Endothelial cell of umbilical vein (primary cell): ENCODE measurements at regions of chr21 and their contacts with region 1.

Region 1: DNA sequence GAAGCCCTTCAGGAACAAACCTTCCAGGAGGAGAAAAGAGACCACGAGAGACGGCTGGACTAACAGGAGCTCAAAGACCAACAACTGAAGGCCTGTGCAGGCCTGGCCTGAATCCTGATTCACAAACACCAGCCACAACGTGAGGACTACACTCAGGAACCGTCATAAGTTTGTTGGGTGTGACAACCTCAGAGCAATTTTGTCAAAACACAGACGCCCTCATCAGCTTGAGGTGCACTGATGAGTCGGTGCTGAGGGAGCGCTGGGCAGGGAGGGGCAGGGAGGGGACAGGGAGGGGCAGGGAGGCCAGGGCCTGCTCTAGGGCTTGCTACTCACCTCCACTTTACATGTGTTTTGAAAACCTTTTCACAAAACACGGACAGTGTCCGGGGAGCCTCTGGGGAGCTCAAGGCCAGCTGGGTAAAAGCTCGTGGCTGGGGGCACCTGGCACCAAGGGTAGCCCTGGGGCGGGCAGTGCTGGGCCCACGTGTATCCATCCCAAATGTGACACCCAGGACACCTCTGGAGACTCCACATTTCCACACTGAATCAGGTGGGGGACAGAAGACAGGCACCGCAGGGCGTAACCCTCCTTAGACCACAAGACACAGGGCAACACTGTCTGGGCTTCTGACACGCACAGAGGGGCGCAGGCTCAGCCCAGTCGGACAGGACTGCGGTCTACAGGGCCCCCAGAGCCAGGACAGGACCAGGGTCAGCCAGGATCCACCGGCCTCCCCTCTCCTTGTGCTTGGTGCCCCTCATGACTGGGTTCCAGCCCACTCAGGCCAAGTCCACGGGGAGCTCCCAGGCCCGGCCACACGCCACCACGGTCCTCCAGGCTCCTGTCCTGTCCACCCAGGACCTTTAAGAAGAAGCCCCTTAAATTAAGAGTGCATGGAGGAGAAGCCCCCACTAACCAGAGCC is 16.5 kb downstream of the LSS start:
- DNase-seq: no peak
- H3K4me3 ChIP-seq: no peak overlapping the region
- H3K27ac ChIP-seq: no peak overlapping the region
- H3K4me1 ChIP-seq: no peaks in the 10 kb centered on the region
- H3K27me3 ChIP-seq: no peaks in the 10 kb centered on the region
- CTCF ChIP-seq: no peak
- POLR2A ChIP-seq: no peak

Region 2: DNA sequence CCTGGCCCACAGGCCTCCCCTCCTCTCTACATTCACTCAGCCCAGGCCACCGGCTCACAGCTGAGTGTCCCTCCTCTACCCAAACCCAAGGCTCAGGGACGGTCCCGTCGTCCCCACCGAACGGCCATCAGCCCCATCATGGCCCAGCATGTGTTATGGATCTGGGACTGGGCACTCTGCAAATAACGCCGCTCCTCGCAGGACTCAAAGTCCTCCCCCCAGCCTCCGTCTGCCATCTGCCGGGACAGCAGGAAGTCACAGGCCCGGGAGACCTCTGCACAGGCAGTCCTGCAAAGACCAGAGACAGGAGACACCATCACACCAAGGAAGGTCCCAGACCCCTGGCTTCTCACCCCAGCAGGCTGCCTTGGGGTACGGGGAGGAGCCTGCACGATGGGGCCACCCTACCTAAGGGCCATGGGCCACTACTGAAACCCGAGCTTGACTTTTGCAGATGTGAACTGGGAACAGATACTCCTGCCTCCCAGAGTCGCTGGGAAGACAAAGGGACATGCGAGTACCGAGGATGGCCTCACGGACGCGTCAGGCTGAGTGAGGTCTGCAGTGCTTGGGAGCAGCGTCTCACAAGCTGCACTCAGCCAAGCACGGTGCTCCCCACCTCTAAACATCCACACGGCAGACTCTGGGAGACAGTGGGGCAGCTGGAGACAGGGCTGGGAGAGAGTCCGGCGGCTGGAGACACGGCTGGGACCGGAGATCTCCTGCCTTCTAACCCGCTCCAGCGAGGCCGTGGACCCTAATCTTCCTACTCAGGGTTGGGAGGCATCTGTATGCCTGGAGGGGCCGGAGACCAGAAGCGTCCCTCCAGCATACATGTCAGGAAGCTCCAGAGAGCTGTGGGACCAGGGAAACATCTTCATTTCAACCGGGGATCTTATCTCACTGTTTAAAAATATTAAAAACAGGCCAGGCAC is 17.4 kb before region 1 on chr21:
- CTCF ChIA-PET with region 1: no interaction called
- POLR2A ChIA-PET with region 1: interaction called, 10 read pairs
- dilution Hi-C with region 1: no loop called
- intact Hi-C with region 1: no loop called
- DNase-seq: no peak
- H3K4me3 ChIP-seq: no peak overlapping the region
- H3K27ac ChIP-seq: no peak overlapping the region
- H3K4me1 ChIP-seq: peaks cover 3% of the 10 kb centered on the region
- H3K27me3 ChIP-seq: no peaks in the 10 kb centered on the region
- CTCF ChIP-seq: no peak
- POLR2A ChIP-seq: no peak

Region 3: GRCh38 chr21:46253610-46254124 is 41.6 kb after region 1 on chr21:
- CTCF ChIA-PET with region 1: no interaction called
- POLR2A ChIA-PET with region 1: no interaction called
- dilution Hi-C with region 1: no loop called
- intact Hi-C with region 1: no loop called
- DNase-seq: peak; percentile 7
- H3K4me3 ChIP-seq: no peak overlapping the region
- H3K27ac ChIP-seq: no peak overlapping the region
- H3K4me1 ChIP-seq: no peaks in the 10 kb centered on the region
- H3K27me3 ChIP-seq: no peaks in the 10 kb centered on the region
- CTCF ChIP-seq: no peak
- POLR2A ChIP-seq: no peak

Region 4: DNA sequence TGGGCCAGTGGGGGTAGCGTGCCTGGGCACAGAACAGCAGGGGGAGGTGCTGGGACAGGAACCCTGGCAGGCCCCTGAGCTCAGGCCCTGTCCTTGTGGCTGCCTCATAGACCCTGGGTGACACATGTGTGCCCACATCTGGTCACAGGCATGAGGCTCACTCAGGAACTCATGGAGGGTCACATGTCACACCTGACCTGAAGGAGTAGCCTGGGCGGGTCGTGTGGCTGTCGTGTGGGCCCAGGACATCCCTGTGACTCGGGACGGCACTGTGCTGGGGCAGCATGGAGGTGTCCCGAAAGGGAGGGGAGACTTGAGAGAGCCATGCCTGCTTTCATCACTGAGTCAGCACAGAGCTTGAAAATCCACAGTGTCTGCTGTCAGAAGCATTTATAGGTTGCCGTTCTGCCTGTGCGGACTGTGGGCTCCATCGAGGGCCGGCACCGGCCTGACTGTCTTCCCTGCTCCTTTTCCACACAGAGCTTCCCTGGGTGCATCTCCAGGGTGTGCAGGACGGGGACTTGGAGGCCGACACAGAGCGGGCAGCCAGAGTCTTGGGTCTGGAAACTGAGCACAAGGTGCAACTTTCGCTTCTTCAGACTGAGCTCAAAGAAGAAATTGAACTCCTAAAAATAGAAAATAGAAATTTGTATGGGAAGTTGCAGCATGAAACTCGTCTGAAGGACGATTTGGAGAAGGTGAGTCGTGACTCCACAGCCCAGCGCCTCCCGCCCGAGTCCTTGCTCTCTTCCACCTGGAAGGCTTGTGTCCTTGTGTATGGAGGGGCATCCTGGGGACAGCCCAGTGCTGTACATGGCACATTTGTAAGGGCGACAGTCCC is 144.7 kb after region 1 on chr21:
- CTCF ChIA-PET with region 1: no interaction called
- POLR2A ChIA-PET with region 1: no interaction called
- dilution Hi-C with region 1: no loop called
- intact Hi-C with region 1: no loop called
- DNase-seq: no peak
- H3K4me3 ChIP-seq: no peak overlapping the region
- H3K27ac ChIP-seq: no peak overlapping the region
- H3K4me1 ChIP-seq: no peaks in the 10 kb centered on the region
- H3K27me3 ChIP-seq: no peaks in the 10 kb centered on the region
- CTCF ChIP-seq: no peak
- POLR2A ChIP-seq: no peak